Adrenal gland (tissue), 19 donors: ENCODE measurements at regions of chr1 and their contacts with region 1.

Region 1: DNA sequence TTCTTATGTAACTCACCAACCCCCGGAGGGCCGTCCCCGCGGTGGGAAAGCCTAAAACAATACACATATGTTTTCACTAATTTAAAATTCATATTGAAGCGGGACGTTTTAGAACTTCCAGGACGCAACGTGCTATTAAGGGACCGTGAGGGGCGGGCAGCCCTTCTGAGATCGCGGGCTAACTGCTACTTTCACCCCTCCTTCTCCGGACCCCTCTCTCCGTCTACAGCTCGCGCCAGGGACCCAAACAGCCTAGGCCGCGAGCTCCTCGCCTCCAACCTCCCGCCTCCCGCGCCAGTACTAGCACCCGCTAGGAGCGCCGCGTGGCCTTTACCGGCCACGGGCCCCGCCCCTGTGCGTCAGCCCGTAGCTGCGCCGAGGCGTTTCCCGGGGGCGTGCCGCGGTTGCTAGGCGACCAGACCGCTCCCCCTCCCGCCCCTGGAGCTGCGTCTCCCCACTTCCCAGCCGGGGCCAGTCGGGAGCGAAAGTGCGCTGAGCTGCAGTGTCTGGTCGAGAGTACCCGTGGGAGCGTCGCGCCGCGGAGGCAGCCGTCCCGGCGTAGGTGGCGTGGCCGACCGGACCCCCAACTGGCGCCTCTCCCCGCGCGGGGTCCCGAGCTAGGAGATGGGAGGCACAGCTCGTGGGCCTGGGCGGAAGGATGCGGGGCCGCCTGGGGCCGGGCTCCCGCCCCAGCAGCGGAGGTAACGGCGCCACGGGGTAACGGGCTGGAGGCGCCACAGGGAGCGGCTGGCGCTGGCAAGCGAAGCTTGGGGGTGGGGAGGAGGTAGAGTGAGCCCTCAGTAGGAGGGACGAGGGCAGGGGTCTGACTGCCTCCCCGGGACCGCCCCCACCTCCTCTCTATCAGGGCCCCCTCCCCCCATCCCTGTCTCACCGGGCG is at the start of gene DYRK3:
- DNase-seq: peak; percentile 95 to 97 (median 97)
- H3K4me3 ChIP-seq: peak within 1 kb of the TSS; percentile 37 to 97 (median 80)
- H3K27ac ChIP-seq: peak within 1 kb of the TSS in 4 of 5 donors; percentile 27 to 85 (median 62)
- H3K4me1 ChIP-seq: peaks cover 8 to 28% of the 10 kb centered on the region in 2 donors
- H3K27me3 ChIP-seq: no peaks in the 10 kb centered on the region
- CTCF ChIP-seq: no peak
- POLR2A ChIP-seq: peak; percentile 72 to 93
- total RNA-seq, gene DYRK3: 2.9 to 6.3 (median 5.2) TPM

Region 2: DNA sequence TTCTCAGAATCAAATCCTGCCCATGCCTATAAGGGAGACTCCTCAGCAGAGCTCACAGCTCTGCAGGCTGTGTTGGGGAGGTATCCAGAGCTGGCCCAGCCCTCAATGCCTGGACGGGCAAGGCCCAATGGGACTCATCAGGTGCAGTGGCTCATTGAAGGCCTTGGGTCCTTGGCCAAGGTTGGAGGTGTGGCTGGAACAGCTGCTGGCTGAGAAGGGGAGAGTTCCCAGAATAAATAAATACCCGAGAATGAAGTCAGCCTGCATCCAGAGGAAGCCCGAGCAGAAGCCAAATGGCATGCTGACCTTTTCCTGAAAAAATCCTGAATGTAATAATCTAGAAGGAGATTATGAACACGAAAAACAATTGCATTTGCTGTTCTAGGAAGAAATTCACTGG is 190.2 kb before region 1 on chr1:
- intact Hi-C with region 1: no loop called
- DNase-seq: peak; percentile 61 to 93 (median 82)
- H3K4me3 ChIP-seq: no peak overlapping the region
- H3K27ac ChIP-seq: peak overlapping the region in 2 of 5 donors; percentile 33 to 53
- H3K4me1 ChIP-seq: peaks cover 7 to 12% of the 10 kb centered on the region in 2 donors
- H3K27me3 ChIP-seq: no peaks in the 10 kb centered on the region
- CTCF ChIP-seq: no peak
- POLR2A ChIP-seq: no peak

Region 3: DNA sequence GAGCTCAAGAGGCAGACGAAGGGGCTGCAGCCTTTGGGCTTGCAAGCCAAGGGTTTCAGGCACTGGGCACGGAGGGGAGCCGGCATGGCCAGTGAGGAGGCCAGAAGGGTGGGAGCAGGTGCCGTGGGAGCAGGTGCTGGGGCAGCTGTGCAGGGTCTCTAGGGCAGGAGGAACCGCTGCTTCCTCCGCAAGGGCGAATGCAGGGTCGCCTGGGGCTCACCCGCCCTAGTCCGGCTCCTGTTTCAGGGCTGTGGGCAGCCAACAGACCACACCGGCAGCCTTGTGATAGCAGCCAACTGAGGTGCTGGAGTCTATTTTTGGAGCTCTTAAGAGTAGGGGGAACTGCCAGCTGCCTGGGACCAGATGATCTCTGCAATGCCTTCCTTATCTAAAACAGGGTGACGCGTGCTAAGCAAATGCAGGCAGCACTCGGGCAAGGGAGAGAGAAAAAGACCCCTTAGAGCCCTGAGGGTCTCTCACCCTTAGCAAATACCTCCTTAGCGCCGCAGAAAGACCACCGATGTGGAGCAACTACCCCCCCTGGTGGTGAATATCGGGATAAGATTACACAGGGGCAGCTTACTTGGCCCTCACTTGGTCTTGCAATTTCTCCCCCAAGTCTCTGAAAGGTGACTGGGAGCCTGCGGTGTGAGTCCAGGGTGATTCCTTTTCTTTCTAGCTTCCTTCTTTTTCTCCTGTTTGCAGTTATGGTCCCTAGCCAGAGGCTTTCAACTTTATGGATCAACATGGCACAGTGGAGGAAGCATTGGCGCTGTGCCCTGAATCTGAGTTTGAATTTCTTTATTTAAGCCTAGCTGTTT is 28.7 kb after region 1 on chr1:
- intact Hi-C with region 1: loop called in 1 of 2 experiments (anchors 2 kb)
- DNase-seq: peak; percentile 47 to 79 (median 71)
- H3K4me3 ChIP-seq: no peak overlapping the region
- H3K27ac ChIP-seq: no peak overlapping the region
- H3K4me1 ChIP-seq: peaks cover 0 to 11% of the 10 kb centered on the region in 2 donors
- H3K27me3 ChIP-seq: no peaks in the 10 kb centered on the region
- CTCF ChIP-seq: peak; percentile 80 to 92 (median 88)
- POLR2A ChIP-seq: no peak

Region 4: GRCh38 chr1:206761159-206761768 is 125.9 kb after region 1 on chr1:
- intact Hi-C with region 1: no loop called
- DNase-seq: no peak
- H3K4me3 ChIP-seq: no peak overlapping the region
- H3K27ac ChIP-seq: no peak overlapping the region
- H3K4me1 ChIP-seq: no peaks in the 10 kb centered on the region
- H3K27me3 ChIP-seq: peaks cover 3% of the 10 kb centered on the region
- CTCF ChIP-seq: peak in 1 of 6 experiments; percentile 25
- POLR2A ChIP-seq: no peak